ENCODE measurements at regions of chr2 and their contacts with region 1.

Region 1: GRCh38 chr2:218733171-218734021 is 22.8 kb downstream of the TTLL4 start:
- DNase-seq: peak; percentile 91
- H3K4me3 ChIP-seq: no peak overlapping the region
- H3K27ac ChIP-seq: peak overlapping the region; percentile 86
- H3K4me1 ChIP-seq: peaks cover 52% of the 10 kb centered on the region
- H3K27me3 ChIP-seq: no peaks in the 10 kb centered on the region
- CTCF ChIP-seq: no peak

Region 2: GRCh38 chr2:218257390-218257981 is 475.9 kb before region 1 on chr2:
- CTCF ChIA-PET with region 1: no interaction called
- dilution Hi-C with region 1: no loop called
- in situ Hi-C with region 1: no loop called
- intact Hi-C with region 1: no loop called
- DNase-seq: no peak
- H3K4me3 ChIP-seq: no peak overlapping the region
- H3K27ac ChIP-seq: no peak overlapping the region
- H3K4me1 ChIP-seq: no peaks in the 10 kb centered on the region
- H3K27me3 ChIP-seq: no peaks in the 10 kb centered on the region
- CTCF ChIP-seq: peak; percentile 53 to 63

Region 3: GRCh38 chr2:218501665-218502064 is 231.7 kb before region 1 on chr2:
- CTCF ChIA-PET with region 1: no interaction called
- dilution Hi-C with region 1: no loop called
- in situ Hi-C with region 1: no loop called
- intact Hi-C with region 1: no loop called
- DNase-seq: no peak
- H3K4me3 ChIP-seq: no peak overlapping the region
- H3K27ac ChIP-seq: no peak overlapping the region
- H3K4me1 ChIP-seq: no peaks in the 10 kb centered on the region
- H3K27me3 ChIP-seq: no peaks in the 10 kb centered on the region
- CTCF ChIP-seq: no peak

Region 4: GRCh38 chr2:218710687-218711549 is 22.5 kb before region 1 on chr2 and contains the start of gene TTLL4:
- CTCF ChIA-PET with region 1: interaction called, 4 read pairs
- dilution Hi-C with region 1: no loop called
- in situ Hi-C with region 1: no loop called
- intact Hi-C with region 1: loop called (anchors 1 kb)
- DNase-seq: peak; percentile 93
- H3K4me3 ChIP-seq: peak within 1 kb of the TSS; percentile 91 to 98 (median 97)
- H3K27ac ChIP-seq: peak within 1 kb of the TSS; percentile 89
- H3K4me1 ChIP-seq: peaks cover 6% of the 10 kb centered on the region
- H3K27me3 ChIP-seq: no peaks in the 10 kb centered on the region
- CTCF ChIP-seq: peak; percentile 55 to 86
- total RNA-seq, gene TTLL4: 31.3 to 47.3 TPM

Region 5: DNA sequence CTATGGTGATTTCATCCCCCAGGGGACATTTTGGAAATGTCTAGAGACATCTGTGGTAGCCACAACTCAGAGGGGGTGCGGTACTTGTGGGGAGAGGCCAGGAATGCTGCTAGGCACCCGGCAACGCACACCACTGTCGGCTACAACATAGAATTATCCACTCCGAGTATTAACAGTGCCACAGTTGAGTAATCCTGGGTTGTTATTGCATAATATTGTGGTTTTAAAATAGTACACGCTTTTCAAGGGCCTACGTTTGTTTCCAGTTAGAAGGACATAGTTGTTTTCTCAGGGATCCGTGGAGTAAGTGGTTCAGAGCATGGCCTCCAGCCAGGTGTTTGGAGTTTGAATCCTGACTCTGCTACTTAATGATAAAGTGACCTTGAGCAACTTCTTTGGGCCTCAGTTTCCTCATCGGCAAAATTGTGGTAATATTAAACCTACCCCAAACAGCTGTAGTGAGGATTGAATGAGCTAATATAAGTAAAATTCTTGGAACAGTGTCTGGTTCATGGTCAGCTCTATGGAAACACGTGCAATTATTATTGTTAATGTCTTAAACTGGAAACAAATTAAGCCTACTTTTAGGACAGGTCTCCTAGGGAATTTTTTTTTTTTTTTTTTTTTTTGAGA is 73.1 kb after region 1 on chr2:
- CTCF ChIA-PET with region 1: no interaction called
- dilution Hi-C with region 1: no loop called
- in situ Hi-C with region 1: no loop called
- intact Hi-C with region 1: loop called (anchors 1 kb)
- DNase-seq: peak; percentile 94
- H3K4me3 ChIP-seq: no peak overlapping the region
- H3K27ac ChIP-seq: peak overlapping the region; percentile 50
- H3K4me1 ChIP-seq: peaks cover 11% of the 10 kb centered on the region
- H3K27me3 ChIP-seq: no peaks in the 10 kb centered on the region
- CTCF ChIP-seq: no peak

Region 6: DNA sequence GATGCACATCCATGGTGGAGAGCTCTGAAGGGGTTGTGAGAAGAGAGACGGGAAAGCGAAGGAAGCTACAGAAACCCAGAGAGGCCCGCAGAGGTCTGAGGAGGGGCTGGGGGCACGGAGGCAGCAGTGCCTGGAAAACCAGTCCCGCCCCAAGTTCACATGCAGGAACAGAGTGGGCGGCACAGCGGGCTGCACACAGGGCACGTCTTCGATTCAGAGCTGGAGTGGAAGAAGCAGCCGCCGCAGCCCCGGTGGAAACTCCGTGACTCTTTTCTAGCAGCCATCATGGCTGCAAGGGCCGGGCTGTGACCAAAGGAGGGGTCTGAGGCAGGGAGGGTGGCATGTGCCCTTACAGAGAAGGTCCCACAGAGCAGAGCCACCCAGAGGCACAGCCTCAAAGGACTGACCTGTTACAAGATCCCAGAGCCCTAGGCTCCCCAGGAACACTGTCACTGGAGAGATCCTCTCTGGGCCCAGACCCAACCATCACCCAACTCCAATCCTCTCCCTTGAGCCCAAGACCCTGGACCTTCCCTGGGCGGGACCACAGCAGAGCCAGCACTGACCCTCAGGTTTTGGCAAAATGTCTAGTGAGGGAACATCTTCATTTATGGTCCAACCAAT is 87.5 kb after region 1 on chr2:
- CTCF ChIA-PET with region 1: no interaction called
- dilution Hi-C with region 1: loop called (anchors 5 kb)
- in situ Hi-C with region 1: no loop called
- intact Hi-C with region 1: no loop called
- DNase-seq: no peak
- H3K4me3 ChIP-seq: no peak overlapping the region
- H3K27ac ChIP-seq: no peak overlapping the region
- H3K4me1 ChIP-seq: no peaks in the 10 kb centered on the region
- H3K27me3 ChIP-seq: peaks cover 3% of the 10 kb centered on the region
- CTCF ChIP-seq: no peak

Measured in mammary epithelial cell (primary cell).